ENCODE measurements at regions of chr1 and their contacts with region 1.

Region 1: DNA sequence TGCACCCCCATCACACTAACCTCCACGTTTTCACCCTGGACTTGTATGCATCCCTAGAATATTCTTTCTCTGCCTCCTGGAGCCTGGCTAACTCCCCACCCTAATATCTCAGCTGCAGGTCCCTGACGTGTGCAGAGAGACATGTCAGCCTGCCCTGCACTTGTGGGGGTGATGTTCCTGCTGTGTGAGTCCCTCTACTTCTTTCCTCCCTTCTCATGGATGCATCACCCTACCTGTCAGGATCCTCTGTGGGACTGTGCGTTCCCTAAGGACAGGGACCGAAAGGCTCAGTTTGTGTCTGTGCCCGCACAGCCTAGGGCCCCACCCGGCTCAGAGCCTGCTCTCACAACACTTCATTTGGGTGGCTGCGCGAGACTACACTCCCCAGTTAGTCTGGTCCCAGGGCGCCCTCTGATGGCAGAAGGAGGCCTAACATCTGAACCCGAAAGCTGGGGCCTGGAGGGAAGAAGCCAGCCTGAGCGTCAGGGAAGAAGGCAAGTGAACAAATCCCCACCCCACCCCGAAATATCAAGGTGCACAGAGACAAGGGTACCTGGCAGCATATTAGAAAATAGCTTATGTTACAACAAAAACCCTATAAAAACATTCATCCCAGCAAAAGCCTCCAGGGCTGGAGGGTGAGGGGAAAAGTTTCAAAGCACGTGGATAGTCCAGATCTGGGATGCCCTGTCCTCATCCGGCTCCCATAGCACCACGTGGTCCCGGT is 3.7 kb downstream of the CD52 start:
- DNase-seq: peak; percentile 89 to 95 (median 92)
- ATAC-seq: peak; percentile 82 to 94 (median 92)
- H3K4me3 ChIP-seq: peak overlapping the region in 2 of 12 donors; percentile 30 to 34
- H3K27ac ChIP-seq: peak overlapping the region in 1 of 12 donors; percentile 60
- H3K4me1 ChIP-seq: peaks cover 0 to 47% (median 7%) of the 10 kb centered on the region in 12 donors
- H3K27me3 ChIP-seq: no peaks in the 10 kb centered on the region
- CTCF ChIP-seq: peak; percentile 81 to 92 (median 90)
- POLR2A ChIP-seq: no peak

Region 2: DNA sequence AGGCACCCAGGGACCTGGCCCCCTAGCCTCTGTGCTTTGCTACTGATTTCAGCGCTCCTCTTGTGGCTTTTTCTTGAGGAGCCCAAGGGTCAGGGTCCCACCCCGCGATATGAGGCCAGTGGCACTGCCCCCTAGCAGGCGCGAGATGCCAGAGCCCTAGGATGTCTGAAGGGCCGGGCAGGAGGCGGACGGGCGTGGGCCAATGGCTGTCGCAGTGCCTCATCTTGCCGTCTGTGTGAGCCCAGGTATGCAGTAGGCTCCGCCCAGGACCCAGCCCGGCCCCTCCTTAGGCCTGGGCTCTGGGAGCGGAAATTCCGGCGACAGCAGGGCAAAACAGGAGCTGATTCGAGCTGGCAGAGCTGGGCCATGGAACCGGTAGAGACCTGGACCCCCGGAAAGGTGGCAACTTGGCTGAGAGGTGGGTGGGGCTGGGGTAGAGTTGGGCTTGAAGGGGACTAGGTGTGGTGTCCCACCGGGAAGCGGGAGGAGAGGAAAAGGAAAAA is 144.2 kb before region 1 on chr1 and contains the start of gene CNKSR1:
- intact Hi-C with region 1: loop called in 3 of 10 experiments (anchors 5 to 10 kb)
- DNase-seq: no peak
- ATAC-seq: peak in 1 of 4 donors; percentile 38
- H3K4me3 ChIP-seq: no peak within 1 kb of the TSS
- H3K27ac ChIP-seq: no peak within 1 kb of the TSS
- H3K4me1 ChIP-seq: peaks cover 0 to 3% (median 0%) of the 10 kb centered on the region in 12 donors
- H3K27me3 ChIP-seq: no peaks in the 10 kb centered on the region
- CTCF ChIP-seq: no peak
- POLR2A ChIP-seq: no peak
- total RNA-seq, gene CNKSR1: 0.60 to 3.4 (median 1.4) TPM in 8 of 9 donors, not detected in the other

Region 3: DNA sequence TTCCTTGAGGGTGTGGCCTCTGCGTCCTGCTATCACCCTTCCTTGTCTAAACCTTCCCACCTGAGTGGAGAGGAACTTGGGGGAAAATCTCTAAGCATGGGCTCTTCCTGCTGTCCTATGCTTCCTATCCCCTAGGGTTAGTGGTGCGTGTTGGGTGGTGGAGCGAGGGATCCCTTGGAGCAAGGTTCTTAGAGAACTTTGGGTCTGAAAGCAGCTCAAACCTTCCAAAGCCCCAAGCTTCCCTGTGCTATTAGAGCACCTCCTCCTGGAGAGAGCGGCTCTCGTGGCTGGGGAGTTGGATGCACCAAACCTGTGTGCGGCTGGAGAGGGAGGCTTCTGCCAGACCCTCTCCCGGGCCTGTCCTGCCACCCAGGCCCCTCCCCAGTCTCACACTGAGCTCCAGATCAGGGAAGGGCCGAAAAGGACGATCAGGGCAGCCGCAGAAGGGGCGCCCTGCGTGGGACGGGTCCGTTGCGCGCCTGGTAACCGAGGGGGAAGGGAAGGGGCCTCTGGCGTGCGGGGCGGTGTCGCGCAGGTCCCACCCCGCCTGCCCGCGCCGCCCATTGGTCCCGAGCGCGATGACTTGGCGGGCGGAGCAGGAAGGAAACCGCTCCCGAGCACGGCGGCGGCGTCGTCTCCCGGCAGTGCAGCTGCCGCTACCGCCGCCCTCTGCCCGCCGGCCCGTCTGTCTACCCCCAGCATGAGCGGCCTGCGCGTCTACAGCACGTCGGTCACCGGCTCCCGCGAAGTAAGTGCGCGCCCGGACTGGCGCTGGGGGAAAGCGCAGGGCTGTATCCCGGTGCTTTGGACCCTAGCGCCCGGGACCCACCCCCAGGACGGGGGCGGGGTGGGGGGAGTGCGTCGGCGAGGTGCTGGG is 41.8 kb before region 1 on chr1 and contains the start of gene SH3BGRL3:
- intact Hi-C with region 1: loop called in 9 of 10 experiments (anchors 1 to 2 kb)
- DNase-seq: peak; percentile 92 to 94 (median 92)
- ATAC-seq: peak; percentile 51 to 85 (median 80)
- H3K4me3 ChIP-seq: peak within 1 kb of the TSS; percentile 56 to 99 (median 74)
- H3K27ac ChIP-seq: peak within 1 kb of the TSS; percentile 60 to 98 (median 92)
- H3K4me1 ChIP-seq: peaks cover 8 to 93% (median 70%) of the 10 kb centered on the region in 12 donors
- H3K27me3 ChIP-seq: no peaks in the 10 kb centered on the region
- CTCF ChIP-seq: peak in 10 of 12 donors; percentile 19 to 67 (median 33)
- POLR2A ChIP-seq: peak; percentile 32 to 94
- total RNA-seq, gene SH3BGRL3: 22.4 to 234 (median 40.0) TPM

Measured in heart left ventricle (tissue), 16 donors.